Activated CD4-positive, alpha-beta T cell treated with anti-CD3 and anti-CD28 coated beads for 36 hours (primary cell): ENCODE measurements at regions of chr15 and their contacts with region 1.

Region 1: DNA sequence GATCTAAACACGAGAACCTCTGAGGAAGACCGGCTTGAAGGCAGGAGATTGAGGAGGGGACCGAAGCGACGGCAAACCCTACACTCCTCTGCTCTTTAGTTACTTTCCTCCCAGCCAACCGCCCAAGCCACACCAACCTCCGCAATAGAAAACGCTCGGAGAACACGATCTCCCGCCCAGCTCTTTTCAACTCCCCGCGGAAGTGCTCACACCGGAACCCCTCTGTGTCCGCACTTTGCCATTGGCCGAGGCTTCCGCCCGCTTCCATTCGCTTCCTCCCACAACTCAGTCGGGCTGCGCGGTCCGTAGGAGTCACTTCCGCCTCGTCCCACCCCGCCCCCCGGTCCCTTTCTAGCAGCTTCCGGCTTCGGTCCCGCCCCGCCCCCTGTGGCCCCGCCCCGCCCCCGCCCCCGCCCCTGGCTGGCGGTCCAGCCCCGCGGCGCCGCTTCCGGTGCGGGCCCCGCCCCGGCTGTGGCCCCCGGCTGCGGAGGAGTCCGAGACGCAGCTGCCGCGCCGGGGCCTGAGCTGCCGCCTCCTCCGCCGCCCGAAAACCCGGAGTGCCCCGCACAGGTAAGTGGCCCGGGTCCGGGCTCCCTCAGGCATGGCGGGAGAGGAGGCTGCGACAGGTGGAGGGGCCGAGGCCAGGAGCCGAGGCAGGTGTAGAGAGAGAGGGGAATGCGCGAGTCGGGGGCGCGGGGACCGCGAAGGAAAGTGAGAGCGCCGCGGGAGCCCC is at the start of gene ARID3B:
- DNase-seq: peak; percentile 99
- ATAC-seq: peak; percentile 88
- H3K4me3 Mint-ChIP-seq: peak within 1 kb of the TSS; percentile 94
- H3K27ac Mint-ChIP-seq: peak within 1 kb of the TSS; percentile 98
- H3K4me1 Mint-ChIP-seq: peaks cover 43% of the 10 kb centered on the region
- H3K27me3 Mint-ChIP-seq: peaks cover 2% of the 10 kb centered on the region
- total RNA-seq, gene ARID3B: 23.9 to 25.4 TPM

Region 2: GRCh38 chr15:74373731-74374647 is 166.9 kb before region 1 on chr15:
- CTCF ChIA-PET with region 1: interaction called, 7 read pairs
- POLR2A ChIA-PET with region 1: no interaction called
- intact Hi-C with region 1: loop called (anchors 1 to 2 kb)
- DNase-seq: peak; percentile 97
- ATAC-seq: peak; percentile 84
- H3K4me3 Mint-ChIP-seq: peak overlapping the region; percentile 76
- H3K27ac Mint-ChIP-seq: no peak overlapping the region
- H3K4me1 Mint-ChIP-seq: peaks cover 31% of the 10 kb centered on the region
- H3K27me3 Mint-ChIP-seq: peaks cover 7% of the 10 kb centered on the region

Region 3: GRCh38 chr15:74407055-74407691 is 133.8 kb before region 1 on chr15:
- CTCF ChIA-PET with region 1: interaction called, 5 read pairs
- POLR2A ChIA-PET with region 1: interaction called, 3 read pairs
- intact Hi-C with region 1: loop called (anchors 1 to 5 kb)
- DNase-seq: no peak
- ATAC-seq: no peak
- H3K4me3 Mint-ChIP-seq: no peak overlapping the region
- H3K27ac Mint-ChIP-seq: no peak overlapping the region
- H3K4me1 Mint-ChIP-seq: peaks cover 29% of the 10 kb centered on the region
- H3K27me3 Mint-ChIP-seq: no peaks in the 10 kb centered on the region

Region 4: GRCh38 chr15:74598126-74598842 is 57.4 kb after region 1 on chr15:
- CTCF ChIA-PET with region 1: no interaction called
- POLR2A ChIA-PET with region 1: no interaction called
- intact Hi-C with region 1: loop called (anchors 1 kb)
- DNase-seq: peak; percentile 94
- ATAC-seq: peak; percentile 99
- H3K4me3 Mint-ChIP-seq: peak overlapping the region; percentile 90
- H3K27ac Mint-ChIP-seq: peak overlapping the region; percentile 99
- H3K4me1 Mint-ChIP-seq: peaks cover 20% of the 10 kb centered on the region
- H3K27me3 Mint-ChIP-seq: no peaks in the 10 kb centered on the region

Region 5: DNA sequence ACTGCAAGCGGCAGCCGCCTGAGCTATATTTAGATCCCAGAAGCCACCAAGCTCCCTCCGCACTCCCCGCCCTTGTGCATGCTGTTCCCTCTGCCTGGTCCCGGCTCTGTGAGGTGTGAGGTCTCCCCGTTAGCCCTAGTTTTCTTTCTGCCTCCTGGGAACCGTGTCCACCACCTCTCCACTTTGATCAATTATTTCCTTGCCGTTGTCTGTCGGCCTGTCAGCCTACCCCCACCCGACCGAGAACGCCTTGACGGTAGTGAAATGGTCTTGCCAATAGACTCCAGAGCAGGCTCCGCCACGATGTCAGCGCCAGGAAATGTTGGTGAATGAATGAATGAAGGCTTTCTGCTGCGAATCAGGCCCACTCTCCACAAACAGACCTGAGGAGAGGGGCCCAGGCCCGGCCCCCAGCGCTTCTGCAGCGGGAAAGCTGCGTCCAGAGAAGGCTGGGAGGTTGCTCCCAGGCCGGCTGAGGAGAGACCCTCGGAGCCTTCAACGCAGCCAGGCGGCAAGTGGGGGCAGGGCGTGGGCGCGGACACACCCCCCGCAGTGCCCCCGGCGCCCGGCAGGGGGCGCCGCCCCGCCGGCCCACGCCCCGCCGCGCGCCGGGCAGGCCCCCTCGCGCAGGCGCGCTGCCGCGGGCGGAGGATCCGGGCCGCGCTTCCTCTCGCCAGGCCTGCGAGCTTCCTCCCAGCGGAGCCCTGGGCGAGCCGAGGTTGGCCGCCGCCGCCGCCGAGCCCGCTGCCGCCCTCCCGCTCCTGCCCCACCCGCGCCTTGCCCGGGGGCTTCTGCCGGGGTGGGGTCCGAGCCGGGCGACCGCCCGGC is 240.7 kb after region 1 on chr15 and contains the start of gene CSK:
- CTCF ChIA-PET with region 1: interaction called, 5 read pairs
- POLR2A ChIA-PET with region 1: no interaction called
- intact Hi-C with region 1: loop called (anchors 1 to 5 kb)
- DNase-seq: peak; percentile 84
- ATAC-seq: peak; percentile 27
- H3K4me3 Mint-ChIP-seq: peak within 1 kb of the TSS; percentile 89
- H3K27ac Mint-ChIP-seq: peak within 1 kb of the TSS; percentile 100
- H3K4me1 Mint-ChIP-seq: peaks cover 56% of the 10 kb centered on the region
- H3K27me3 Mint-ChIP-seq: no peaks in the 10 kb centered on the region
- total RNA-seq, gene CSK: 229 to 272 TPM

Region 6: DNA sequence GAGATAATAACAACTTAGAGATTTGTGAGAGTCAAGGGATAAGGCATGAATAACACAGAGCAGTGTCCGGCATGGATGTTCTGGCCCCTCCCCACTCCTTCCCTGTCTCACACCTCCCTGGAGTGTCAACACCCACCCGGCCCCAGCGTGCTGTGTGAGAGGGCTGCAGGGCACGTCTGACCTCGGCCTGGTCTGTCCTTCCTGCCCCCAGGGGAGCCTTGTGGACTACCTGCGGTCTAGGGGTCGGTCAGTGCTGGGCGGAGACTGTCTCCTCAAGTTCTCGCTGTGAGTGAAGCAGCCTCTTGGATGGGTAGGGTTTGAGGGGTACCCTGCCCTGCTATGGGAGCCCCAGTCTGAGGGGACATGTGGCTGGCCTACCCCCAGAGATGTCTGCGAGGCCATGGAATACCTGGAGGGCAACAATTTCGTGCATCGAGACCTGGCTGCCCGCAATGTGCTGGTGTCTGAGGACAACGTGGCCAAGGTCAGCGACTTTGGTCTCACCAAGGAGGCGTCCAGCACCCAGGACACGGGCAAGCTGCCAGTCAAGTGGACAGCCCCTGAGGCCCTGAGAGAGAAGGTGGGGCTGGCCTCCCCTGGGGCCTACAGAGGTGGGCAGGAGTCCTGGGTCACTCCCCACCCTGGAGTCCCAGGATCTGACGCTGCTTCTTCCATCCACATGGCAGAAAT is 260.5 kb after region 1 on chr15:
- CTCF ChIA-PET with region 1: no interaction called
- POLR2A ChIA-PET with region 1: no interaction called
- intact Hi-C with region 1: no loop called
- DNase-seq: no peak
- ATAC-seq: no peak
- H3K4me3 Mint-ChIP-seq: no peak overlapping the region
- H3K27ac Mint-ChIP-seq: no peak overlapping the region
- H3K4me1 Mint-ChIP-seq: peaks cover 34% of the 10 kb centered on the region
- H3K27me3 Mint-ChIP-seq: no peaks in the 10 kb centered on the region

Region 7: DNA sequence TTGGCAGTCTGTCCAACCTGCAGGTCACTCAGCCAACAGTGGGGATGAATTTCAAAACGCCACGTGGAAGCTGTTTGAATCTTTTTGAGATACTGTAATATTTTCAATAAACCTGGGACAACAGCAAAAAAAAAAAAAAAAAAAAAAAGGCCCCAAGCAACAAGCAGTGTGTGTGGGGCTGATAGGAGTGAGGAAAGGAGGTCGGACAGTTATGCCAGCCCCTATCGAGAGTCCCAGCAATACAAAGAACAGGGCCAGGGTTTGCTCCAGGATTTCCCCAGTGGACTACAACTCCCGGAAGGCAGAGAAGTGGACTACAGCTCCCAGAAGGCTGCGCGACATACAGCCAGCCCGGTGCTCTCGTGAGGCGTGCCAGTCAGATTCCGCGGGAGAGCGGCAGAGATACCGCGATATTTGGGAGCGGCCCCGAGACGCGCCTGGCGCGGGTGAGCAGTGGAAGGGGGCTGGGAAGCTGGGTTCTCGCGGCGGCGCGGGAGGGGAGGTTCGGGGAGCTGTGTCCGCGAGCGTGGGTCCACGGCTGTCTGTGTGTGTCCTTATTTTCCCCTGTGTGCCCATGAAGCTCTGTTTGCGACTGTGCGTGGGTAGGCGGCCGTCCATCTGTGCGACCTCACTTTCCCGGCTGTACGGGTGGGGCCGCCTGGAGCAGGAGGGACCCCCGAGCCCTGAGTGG is 482.4 kb after region 1 on chr15 and contains the start of gene PPCDC:
- CTCF ChIA-PET with region 1: no interaction called
- POLR2A ChIA-PET with region 1: no interaction called
- intact Hi-C with region 1: loop called in 1 of 2 experiments (anchors 2 kb)
- DNase-seq: peak; percentile 97
- ATAC-seq: peak; percentile 100
- H3K4me3 Mint-ChIP-seq: peak within 1 kb of the TSS; percentile 89
- H3K27ac Mint-ChIP-seq: peak within 1 kb of the TSS; percentile 95
- H3K4me1 Mint-ChIP-seq: peaks cover 13% of the 10 kb centered on the region
- H3K27me3 Mint-ChIP-seq: no peaks in the 10 kb centered on the region
- total RNA-seq, gene PPCDC: 23.3 to 24.0 TPM

Region 8: GRCh38 chr15:75625542-75626347 is 1084.8 kb after region 1 on chr15 and contains the start of gene SNUPN:
- CTCF ChIA-PET with region 1: no interaction called
- POLR2A ChIA-PET with region 1: no interaction called
- intact Hi-C with region 1: loop called in 1 of 2 experiments (anchors 10 kb)
- DNase-seq: peak; percentile 97
- ATAC-seq: peak; percentile 88
- H3K4me3 Mint-ChIP-seq: peak within 1 kb of the TSS; percentile 93
- H3K27ac Mint-ChIP-seq: peak within 1 kb of the TSS; percentile 99
- H3K4me1 Mint-ChIP-seq: peaks cover 45% of the 10 kb centered on the region
- H3K27me3 Mint-ChIP-seq: no peaks in the 10 kb centered on the region
- total RNA-seq, gene SNUPN: 37.4 to 40.3 TPM